ENCODE measurements at regions of chr2 and their contacts with region 1.

Region 1: GRCh38 chr2:156435715-156436496 is at the start of gene GPD2:
- DNase-seq: peak; percentile 92
- H3K4me3 ChIP-seq: peak within 1 kb of the TSS; percentile 45 to 79 (median 54)
- H3K27ac ChIP-seq: peak within 1 kb of the TSS; percentile 93 to 96 (median 96)
- H3K4me1 ChIP-seq: peaks cover 0 to 45% (median 29%) of the 10 kb centered on the region in 4 donors
- H3K27me3 ChIP-seq: no peaks in the 10 kb centered on the region
- CTCF ChIP-seq: peak in 1 of 5 experiments; percentile 40
- EP300 ChIP-seq: no peak
- POLR2A ChIP-seq: peak; percentile 90
- total RNA-seq, gene GPD2: 65.5 to 161 (median 98.6) TPM

Region 2: DNA sequence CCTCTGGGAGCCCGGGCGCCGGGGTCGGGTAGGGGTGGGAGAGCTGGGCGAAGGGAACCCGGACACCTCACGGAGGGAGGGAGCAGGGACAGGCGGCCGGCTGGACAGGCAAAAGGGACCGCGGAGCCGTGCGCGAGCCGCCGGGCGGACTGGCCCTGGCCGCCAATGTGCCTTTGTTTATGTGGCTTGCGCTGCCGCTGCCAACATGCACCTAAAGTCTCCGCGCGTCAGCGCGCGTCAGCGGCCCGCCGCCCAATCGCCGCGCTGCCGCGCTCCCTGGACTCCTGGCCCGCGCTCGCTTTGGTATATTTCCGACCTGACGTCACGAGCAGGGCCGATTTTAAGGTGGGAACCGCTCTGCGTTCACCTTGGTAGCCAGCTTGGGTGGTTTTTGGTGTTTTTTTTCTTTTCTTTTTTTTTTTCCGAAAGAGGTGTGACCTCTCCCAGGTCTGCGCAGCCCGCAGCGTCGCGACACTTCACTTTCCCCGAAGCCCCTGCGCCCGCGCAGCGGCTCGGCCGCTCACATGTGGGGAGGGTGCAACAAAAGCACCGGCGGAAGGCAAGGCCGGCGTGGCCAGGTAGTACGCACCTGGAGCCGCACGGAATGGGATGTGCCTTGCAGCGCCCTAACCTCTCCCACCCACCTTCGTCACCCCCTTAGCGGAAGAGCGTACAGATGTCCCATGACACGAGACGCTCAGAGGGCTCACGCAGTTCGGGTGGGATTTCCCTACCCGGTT is 103.2 kb before region 1 on chr2 and contains the start of gene NR4A2:
- in situ Hi-C with region 1: loop called in 2 of 4 experiments (anchors 25 kb)
- intact Hi-C with region 1: loop called (anchors 5 kb)
- DNase-seq: peak; percentile 95
- H3K4me3 ChIP-seq: peak within 1 kb of the TSS; percentile 67 to 95 (median 82)
- H3K27ac ChIP-seq: peak within 1 kb of the TSS; percentile 98 to 100 (median 98)
- H3K4me1 ChIP-seq: peaks cover 3 to 36% (median 19%) of the 10 kb centered on the region in 4 donors
- H3K27me3 ChIP-seq: peaks cover 8% of the 10 kb centered on the region
- CTCF ChIP-seq: no peak
- EP300 ChIP-seq: no peak
- POLR2A ChIP-seq: peak; percentile 89
- total RNA-seq, gene NR4A2: 2.9 to 7.4 (median 4.1) TPM

Measured in transverse colon (tissue), 4 donors.